Mammary epithelial cell (primary cell): ENCODE measurements at regions of chr2 and their contacts with region 1.

Region 1: DNA sequence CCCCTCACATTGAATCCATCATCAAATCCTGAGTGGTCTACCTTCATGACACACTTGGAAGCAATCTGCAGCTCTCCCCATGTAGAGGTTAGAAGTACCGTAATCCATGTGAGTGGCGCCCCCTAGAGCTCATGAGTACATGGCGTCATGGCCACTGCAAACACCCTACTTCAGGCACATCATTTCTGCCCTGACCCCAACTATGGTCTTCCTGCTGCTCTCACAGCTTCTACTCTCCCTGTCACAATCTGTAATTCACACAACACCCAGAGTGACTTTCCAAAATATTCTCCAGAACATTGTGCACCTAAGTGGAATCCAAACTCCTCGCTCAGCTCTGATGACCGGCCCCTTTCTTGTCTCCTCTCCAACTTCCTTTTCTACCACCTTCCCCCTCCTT is 141.9 kb downstream of the ANKRD44 start:
- DNase-seq: no peak
- H3K4me3 ChIP-seq: no peak overlapping the region
- H3K27ac ChIP-seq: no peak overlapping the region
- H3K4me1 ChIP-seq: no peaks in the 10 kb centered on the region
- H3K27me3 ChIP-seq: no peaks in the 10 kb centered on the region
- CTCF ChIP-seq: peak; percentile 71

Region 2: GRCh38 chr2:197011799-197012641 is 156.7 kb before region 1 on chr2:
- CTCF ChIA-PET with region 1: no interaction called
- dilution Hi-C with region 1: no loop called
- in situ Hi-C with region 1: no loop called
- intact Hi-C with region 1: loop called (anchors 1 kb)
- DNase-seq: peak; percentile 32
- H3K4me3 ChIP-seq: no peak overlapping the region
- H3K27ac ChIP-seq: no peak overlapping the region
- H3K4me1 ChIP-seq: peaks cover 4% of the 10 kb centered on the region
- H3K27me3 ChIP-seq: no peaks in the 10 kb centered on the region
- CTCF ChIP-seq: peak; percentile 73 to 83

Region 3: DNA sequence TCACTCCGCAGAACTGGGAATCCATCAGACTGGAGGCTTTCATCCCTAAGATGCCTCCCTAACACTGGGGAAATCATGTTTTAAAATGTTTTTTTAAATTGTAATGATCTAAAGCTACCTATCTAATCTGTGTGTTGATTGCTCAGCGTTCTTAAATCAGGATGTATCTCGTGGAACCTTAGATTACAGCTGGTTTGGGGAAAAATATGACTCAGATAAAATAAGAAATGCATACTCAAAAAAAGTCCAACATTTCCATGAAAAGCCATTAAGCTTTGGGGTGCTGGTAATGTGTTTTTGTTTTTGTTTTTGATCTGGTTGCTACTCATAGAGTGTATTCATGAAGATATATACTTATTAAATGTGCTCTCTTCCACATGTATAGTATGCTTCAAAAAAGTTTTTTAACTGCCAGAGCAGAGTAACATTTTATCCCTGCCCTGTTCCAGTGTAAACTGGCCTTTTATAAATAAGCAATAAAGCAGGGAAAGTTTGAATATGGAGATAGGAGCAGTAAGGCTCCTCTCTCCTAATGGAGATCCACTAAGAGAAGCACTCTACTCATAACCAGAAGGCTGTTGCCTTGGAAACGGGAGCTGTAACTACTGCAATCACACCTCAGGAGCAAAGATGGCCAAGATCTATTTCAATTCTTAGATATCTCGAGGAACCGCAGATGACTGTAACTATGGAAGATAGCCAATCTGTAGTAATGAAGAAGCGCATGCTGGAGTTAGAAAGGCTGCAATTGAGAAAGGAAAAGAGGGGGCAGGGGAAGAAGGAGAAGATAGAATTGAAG is 100.3 kb after region 1 on chr2:
- CTCF ChIA-PET with region 1: no interaction called
- dilution Hi-C with region 1: no loop called
- in situ Hi-C with region 1: no loop called
- intact Hi-C with region 1: no loop called
- DNase-seq: peak; percentile 48
- H3K4me3 ChIP-seq: no peak overlapping the region
- H3K27ac ChIP-seq: no peak overlapping the region
- H3K4me1 ChIP-seq: no peaks in the 10 kb centered on the region
- H3K27me3 ChIP-seq: no peaks in the 10 kb centered on the region
- CTCF ChIP-seq: no peak

Region 4: DNA sequence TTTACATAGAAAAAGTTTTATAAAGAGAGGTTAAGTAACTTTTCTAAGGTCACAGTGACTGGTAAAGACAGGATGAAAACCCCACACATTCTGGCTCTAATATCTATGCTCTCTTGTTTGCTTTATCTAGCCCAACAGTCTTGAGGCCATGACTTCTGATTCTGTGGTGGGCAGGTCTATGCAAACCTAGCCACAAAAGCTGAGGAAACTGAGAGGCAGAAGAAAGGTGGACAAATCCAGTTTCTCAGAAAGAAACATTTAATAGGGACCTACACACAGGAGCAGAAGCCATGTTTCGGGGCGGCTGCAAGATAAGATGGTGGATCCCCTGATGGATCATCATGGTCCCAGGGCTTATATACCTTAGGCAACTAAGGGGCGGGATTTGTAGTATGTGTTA is 309.1 kb after region 1 on chr2:
- CTCF ChIA-PET with region 1: no interaction called
- dilution Hi-C with region 1: no loop called
- in situ Hi-C with region 1: no loop called
- intact Hi-C with region 1: no loop called
- DNase-seq: no peak
- H3K4me3 ChIP-seq: no peak overlapping the region
- H3K27ac ChIP-seq: no peak overlapping the region
- H3K4me1 ChIP-seq: no peaks in the 10 kb centered on the region
- H3K27me3 ChIP-seq: no peaks in the 10 kb centered on the region
- CTCF ChIP-seq: no peak